Pancreas (tissue), 10 donors: ENCODE measurements at regions of chr17 and their contacts with region 1.

Region 1: DNA sequence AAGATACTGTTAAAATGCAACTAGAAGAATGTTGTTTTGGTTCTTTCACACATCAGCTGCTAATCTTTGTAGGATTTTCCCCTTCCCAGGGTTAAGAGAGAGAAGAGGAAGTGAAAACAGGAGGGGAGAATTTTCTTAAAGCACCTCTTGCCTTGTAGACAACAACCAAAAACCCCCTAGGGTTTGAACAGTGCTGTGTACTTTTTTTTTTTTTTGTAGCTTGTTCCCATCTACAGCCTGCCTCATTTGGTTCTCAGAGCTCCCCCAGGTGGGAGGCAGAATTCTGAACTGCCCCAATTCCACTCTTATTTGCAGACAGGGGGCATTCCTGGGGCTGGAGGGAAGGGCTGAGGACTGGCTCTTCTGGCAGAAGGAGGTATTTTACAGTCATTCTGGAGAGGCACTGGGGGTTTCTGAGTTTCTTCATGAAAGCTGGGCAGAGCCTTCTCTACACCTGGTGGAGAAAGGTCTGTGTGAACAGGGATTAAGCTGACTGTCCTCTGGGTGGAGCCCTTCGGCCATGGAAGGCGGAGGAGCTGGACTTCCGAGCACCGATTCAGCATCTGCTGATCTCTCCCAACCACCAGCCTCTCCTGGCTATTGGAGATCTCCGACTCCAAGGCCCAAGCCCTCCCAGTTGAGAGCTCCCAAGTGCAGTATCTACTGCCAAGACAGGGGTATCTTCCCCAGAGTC is 32.2 kb downstream of the SMARCE1 start:
- DNase-seq: peak; percentile 30 to 70 (median 52)
- ATAC-seq: peak; percentile 52 to 84 (median 78)
- H3K4me3 ChIP-seq: no peak overlapping the region
- H3K27ac ChIP-seq: no peak overlapping the region
- H3K4me1 ChIP-seq: no peaks in the 10 kb centered on the region
- H3K27me3 ChIP-seq: peaks cover 0 to 7% (median 3%) of the 10 kb centered on the region in 4 donors
- CTCF ChIP-seq: peak in 2 of 4 donors; percentile 14 to 19

Region 2: GRCh38 chr17:40663252-40663651 is 47.8 kb after region 1 on chr17:
- intact Hi-C with region 1: no loop called
- DNase-seq: no peak
- ATAC-seq: no peak
- H3K4me3 ChIP-seq: no peak overlapping the region
- H3K27ac ChIP-seq: no peak overlapping the region
- H3K4me1 ChIP-seq: no peaks in the 10 kb centered on the region
- H3K27me3 ChIP-seq: no peaks in the 10 kb centered on the region
- CTCF ChIP-seq: no peak

Region 3: DNA sequence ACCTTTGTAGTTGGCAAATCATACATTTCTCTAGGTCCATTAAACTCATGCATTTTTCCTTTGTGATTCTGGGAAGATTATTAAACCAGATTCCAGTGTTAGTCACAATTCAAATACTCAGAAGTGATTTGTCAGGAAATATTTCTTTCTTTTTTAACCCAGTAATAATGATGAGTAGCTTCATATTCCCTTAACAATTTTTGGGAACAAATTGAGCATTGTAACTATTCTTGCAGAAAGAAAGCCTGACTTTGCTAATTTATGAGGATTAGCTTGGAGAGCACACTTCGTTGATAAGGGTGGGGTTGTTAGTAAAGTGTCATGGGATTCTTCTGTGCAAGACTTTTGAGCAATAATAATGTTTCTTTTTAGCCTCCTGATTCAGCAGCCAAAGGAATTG is 106.8 kb after region 1 on chr17:
- intact Hi-C with region 1: no loop called
- DNase-seq: no peak
- ATAC-seq: peak in 1 of 4 donors; percentile 27
- H3K4me3 ChIP-seq: no peak overlapping the region
- H3K27ac ChIP-seq: peak overlapping the region in 1 of 4 donors; percentile 60
- H3K4me1 ChIP-seq: no peaks in the 10 kb centered on the region
- H3K27me3 ChIP-seq: no peaks in the 10 kb centered on the region
- CTCF ChIP-seq: no peak

Region 4: GRCh38 chr17:40791787-40792436 is 176.5 kb after region 1 on chr17:
- intact Hi-C with region 1: loop called (anchors 5 to 10 kb)
- DNase-seq: no peak
- ATAC-seq: peak in 2 of 4 donors; percentile 30 to 54
- H3K4me3 ChIP-seq: no peak overlapping the region
- H3K27ac ChIP-seq: no peak overlapping the region
- H3K4me1 ChIP-seq: no peaks in the 10 kb centered on the region
- H3K27me3 ChIP-seq: peaks cover 0 to 5% (median 0%) of the 10 kb centered on the region in 4 donors
- CTCF ChIP-seq: peak in 3 of 4 donors; percentile 21 to 38 (median 30)

Region 5: DNA sequence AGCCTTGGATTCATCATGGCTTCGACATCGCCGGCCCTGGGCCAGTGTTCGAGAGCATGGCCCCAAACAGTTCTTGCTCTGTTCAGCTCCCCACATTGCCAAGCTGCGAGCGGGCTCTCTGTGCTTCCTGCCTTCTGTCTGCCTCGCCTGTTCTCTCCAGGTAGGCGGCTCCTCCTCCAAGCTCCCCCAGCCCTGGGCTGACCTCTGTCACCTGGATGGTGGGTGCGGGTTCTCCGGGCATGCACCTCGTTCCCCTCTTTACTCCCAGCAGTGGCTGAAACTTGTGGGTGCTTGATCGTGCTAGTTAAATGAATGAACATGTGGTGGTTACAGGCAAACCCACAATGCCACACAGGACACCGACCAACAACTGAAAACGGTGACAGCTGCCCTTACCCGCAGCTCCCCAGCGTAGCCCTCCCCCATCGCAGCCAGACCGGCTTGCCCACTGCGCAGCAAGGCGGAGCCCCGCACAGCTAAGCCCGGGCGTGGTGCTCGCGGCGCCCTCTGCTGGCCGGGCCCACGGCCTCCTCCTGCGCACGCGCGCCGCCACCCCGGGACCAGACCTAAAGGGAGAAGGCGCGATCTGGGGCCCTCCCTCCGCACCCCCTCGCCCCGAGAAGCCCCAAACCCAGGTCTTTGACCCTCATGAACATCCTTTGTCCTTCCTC is 1050.3 kb after region 1 on chr17:
- intact Hi-C with region 1: loop called in 1 of 3 experiments (anchors 10 kb)
- DNase-seq: peak; percentile 89 to 98 (median 92)
- ATAC-seq: peak; percentile 87 to 93 (median 90)
- H3K4me3 ChIP-seq: peak overlapping the region; percentile 5 to 49 (median 28)
- H3K27ac ChIP-seq: peak overlapping the region; percentile 67 to 92 (median 82)
- H3K4me1 ChIP-seq: peaks cover 0 to 6% (median 0%) of the 10 kb centered on the region in 3 donors
- H3K27me3 ChIP-seq: no peaks in the 10 kb centered on the region
- CTCF ChIP-seq: peak; percentile 89 to 95 (median 92)